Ascending aorta (tissue), 2 donors: ENCODE measurements at regions of chr10 and their contacts with region 1.

Region 1: GRCh38 chr10:102503281-102504220 is at the start of gene SUFU:
- DNase-seq: peak; percentile 96 to 99
- H3K4me3 ChIP-seq: peak within 1 kb of the TSS; percentile 93 to 100
- H3K27ac ChIP-seq: peak within 1 kb of the TSS; percentile 66 to 94
- H3K4me1 ChIP-seq: peaks cover 9 to 15% of the 10 kb centered on the region in 2 donors
- H3K27me3 ChIP-seq: no peaks in the 10 kb centered on the region
- CTCF ChIP-seq: peak; percentile 83 to 93 (median 87)
- total RNA-seq, gene SUFU: 17.3 TPM

Region 2: DNA sequence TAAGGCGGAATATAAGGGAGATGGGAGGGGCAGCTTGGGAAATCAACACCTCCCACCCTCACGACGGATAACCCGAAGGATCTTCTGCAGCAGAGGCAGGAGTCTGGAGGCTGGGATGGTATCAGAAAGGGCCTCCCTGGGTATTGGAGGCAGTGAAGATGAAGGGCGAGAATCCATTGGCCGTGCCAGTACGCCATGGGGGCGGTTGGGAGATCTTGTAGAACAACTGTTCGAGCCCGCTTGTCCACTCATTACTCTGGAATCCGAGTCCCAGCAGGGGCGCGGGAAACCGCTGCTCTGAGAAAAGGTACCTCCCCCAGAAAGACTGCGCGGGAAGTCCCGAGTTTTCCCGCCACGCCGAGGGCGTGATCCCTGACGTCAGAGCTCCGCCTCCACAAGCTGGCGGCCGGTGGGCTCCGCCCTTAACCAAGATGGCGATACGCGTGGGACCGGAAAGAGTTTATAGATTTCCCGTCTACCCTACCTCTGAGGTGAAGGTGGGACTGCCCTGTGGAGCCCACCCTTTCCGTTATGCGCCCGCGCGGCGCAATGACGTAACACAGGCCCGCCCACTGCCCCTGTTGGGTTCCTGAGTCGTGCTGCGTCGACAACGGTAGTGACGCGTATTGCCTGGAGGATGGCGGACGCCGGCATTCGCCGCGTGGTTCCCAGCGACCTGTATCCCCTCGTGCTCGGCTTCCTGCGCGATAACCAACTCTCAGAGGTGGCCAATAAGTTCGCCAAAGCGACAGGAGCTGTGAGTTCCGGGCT is 351.6 kb before region 1 on chr10 and contains the start of gene NOLC1:
- intact Hi-C with region 1: loop called (anchors 1 kb)
- DNase-seq: peak; percentile 98 to 100
- H3K4me3 ChIP-seq: peak within 1 kb of the TSS; percentile 65 to 73
- H3K27ac ChIP-seq: peak within 1 kb of the TSS; percentile 86 to 93
- H3K4me1 ChIP-seq: peaks cover 8 to 16% of the 10 kb centered on the region in 2 donors
- H3K27me3 ChIP-seq: no peaks in the 10 kb centered on the region
- CTCF ChIP-seq: no peak
- total RNA-seq, gene NOLC1: 33.3 TPM

Region 3: GRCh38 chr10:102394079-102394800 is 109.3 kb before region 1 on chr10:
- intact Hi-C with region 1: loop called (anchors 1 kb)
- DNase-seq: peak; percentile 82 to 97
- H3K4me3 ChIP-seq: peak overlapping the region; percentile 65 to 85
- H3K27ac ChIP-seq: peak overlapping the region; percentile 89 to 97
- H3K4me1 ChIP-seq: peaks cover 8 to 23% of the 10 kb centered on the region in 2 donors
- H3K27me3 ChIP-seq: no peaks in the 10 kb centered on the region
- CTCF ChIP-seq: peak in 2 of 3 experiments; percentile 94 to 99

Region 4: DNA sequence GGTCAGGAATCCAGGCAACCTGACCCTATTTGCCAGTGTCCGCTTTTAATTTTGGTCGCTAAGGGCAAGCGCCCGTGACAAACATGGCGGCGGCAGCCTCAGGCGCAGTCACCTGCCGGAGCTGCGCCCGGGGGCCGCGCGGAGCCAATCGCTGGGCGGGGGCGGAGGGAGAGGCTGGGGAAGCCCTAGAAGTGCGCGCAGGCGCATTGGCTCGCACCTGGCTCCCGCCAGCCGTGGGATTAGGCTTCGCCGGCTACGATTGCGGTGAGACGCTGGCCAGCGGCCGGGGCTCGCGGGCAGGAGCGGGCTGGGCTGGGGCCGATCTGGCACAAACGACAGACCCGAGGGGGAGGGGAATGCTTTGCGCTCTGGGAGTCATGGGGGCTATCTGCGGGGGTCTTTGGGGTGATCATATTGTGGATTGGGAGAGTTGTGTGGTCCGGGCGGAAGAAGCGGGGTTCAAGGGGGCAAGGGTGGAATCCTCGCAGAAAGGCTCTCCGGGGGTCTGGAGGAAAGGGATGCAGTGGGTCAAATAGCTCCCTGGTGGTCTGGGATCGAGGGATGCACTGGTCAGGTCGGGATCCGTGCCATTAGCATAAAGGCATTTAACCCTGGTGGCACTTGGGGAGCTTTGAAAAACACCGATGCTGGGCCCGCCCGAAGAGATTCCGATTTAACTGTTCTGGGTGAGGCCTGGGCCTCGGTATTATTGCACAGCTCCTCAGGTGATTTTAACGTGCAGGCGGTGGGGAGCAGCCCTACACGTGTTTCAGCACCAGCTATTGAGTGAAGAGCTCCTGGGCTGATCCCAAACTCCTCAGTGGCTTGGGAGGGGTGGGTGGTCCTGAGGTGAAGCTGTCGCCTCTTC is 42.1 kb before region 1 on chr10:
- intact Hi-C with region 1: loop called (anchors 1 kb)
- DNase-seq: peak; percentile 68 to 93
- H3K4me3 ChIP-seq: peak overlapping the region; percentile 62 to 71
- H3K27ac ChIP-seq: no peak overlapping the region
- H3K4me1 ChIP-seq: peaks cover 0 to 7% of the 10 kb centered on the region in 2 donors
- H3K27me3 ChIP-seq: no peaks in the 10 kb centered on the region
- CTCF ChIP-seq: no peak

Region 5: GRCh38 chr10:102641880-102642735 is 138.6 kb after region 1 on chr10:
- intact Hi-C with region 1: loop called (anchors 1 kb)
- DNase-seq: peak; percentile 96 to 99
- H3K4me3 ChIP-seq: peak overlapping the region; percentile 97
- H3K27ac ChIP-seq: peak overlapping the region; percentile 98
- H3K4me1 ChIP-seq: peaks cover 6 to 8% of the 10 kb centered on the region in 2 donors
- H3K27me3 ChIP-seq: no peaks in the 10 kb centered on the region
- CTCF ChIP-seq: no peak